ENCODE measurements at regions of chr4 and their contacts with region 1.

Region 1: DNA sequence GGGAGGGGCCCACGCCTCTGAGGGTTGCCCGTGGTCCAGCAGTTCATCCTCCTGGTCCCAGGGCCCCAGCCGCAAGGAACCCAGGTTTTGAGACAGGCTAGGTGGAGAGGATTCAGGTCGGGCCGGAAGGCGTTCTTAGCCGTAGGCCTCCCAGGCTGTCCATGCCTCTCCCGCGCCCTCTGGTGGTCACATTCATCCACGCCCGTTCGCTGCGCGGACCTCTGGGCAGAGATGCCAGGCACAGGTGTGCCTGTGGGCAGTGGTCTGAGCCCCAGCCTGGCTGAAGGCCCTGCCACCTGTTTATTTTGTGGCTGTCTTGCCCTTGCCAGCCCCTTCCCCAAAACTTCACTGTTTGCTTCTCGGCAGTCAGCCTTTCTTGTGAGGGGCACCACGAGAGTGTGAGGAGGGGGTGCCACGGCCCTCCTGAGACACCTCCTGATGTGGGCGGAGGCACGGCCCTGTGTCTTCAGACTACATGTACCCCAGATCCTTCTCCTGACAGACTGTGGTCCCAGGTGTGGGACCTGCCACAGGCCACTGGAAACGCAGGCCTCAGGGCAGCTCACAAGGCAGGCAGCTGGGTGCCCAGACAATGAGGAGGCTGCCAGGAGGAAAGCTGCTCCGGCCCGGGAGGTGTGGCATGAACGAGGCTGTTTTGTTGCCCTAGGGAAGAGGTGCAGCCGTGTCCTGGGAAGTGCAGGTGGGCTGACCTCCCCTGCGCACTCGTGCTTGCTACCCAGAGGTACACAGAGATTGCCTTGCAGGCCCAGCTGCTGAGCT is 5.0 kb downstream of the UVSSA start:
- DNase-seq: peak in 1 of 2 donors; percentile 91
- H3K4me3 ChIP-seq: no peak overlapping the region
- H3K27ac ChIP-seq: no peak overlapping the region
- H3K4me1 ChIP-seq: peaks cover 9 to 15% of the 10 kb centered on the region in 2 donors
- H3K27me3 ChIP-seq: no peaks in the 10 kb centered on the region
- CTCF ChIP-seq: peak; percentile 81 to 95 (median 93)

Region 2: DNA sequence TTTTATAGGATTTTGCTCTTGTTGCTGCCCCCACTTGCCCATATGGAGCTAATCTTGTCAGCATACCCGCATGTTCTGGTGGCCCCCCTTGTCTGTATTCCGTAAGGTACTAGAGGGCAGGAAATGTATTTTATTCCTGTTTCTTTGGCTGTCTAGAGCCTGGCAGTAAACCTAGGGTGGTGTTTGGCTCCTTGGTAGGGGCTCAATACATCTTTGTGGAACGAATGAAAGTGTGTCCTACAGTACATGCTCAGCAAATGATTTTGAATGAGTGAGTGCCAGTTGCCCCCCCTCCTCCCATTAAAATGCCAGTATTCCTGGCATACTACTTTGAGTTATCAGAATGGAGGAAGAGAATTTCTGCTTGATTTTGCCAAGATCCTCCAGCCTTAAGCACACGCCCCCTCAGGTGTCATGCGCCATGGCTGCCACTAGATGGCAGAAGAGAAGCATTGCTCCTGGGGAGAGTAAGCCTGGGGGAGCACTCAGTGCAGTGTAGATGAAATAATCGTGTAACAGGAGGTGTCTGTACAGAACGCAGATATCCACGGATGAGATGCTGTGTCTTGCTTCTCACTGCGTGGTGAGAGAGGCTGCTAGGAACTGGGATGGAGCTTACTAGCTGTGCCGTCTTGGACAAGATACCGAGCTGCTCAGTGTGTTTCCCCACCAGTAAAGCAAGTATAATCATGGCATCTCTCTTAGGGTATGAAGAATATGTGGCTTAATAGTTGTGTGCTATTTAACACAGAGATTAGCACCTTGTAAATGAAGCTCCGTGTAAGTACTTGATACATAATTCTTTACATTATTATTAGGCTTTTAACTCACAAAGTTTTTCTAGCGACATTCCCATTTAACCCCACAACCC is 221.5 kb before region 1 on chr4:
- intact Hi-C with region 1: loop called (anchors 1 kb)
- DNase-seq: peak in 1 of 2 donors; percentile 79
- H3K4me3 ChIP-seq: no peak overlapping the region
- H3K27ac ChIP-seq: no peak overlapping the region
- H3K4me1 ChIP-seq: no peaks in the 10 kb centered on the region
- H3K27me3 ChIP-seq: no peaks in the 10 kb centered on the region
- CTCF ChIP-seq: peak; percentile 92 to 100 (median 98)

Region 3: GRCh38 chr4:1289207-1290164 is 62.6 kb before region 1 on chr4 and contains the start of gene MAEA:
- intact Hi-C with region 1: no loop called
- DNase-seq: peak; percentile 85 to 98
- H3K4me3 ChIP-seq: peak within 1 kb of the TSS; percentile 86 to 96
- H3K27ac ChIP-seq: peak within 1 kb of the TSS; percentile 67 to 77
- H3K4me1 ChIP-seq: peaks cover 13 to 27% of the 10 kb centered on the region in 2 donors
- H3K27me3 ChIP-seq: no peaks in the 10 kb centered on the region
- CTCF ChIP-seq: no peak
- total RNA-seq, gene MAEA: 56.3 TPM

Region 4: GRCh38 chr4:1628892-1629698 is 277.1 kb after region 1 on chr4:
- intact Hi-C with region 1: loop called (anchors 1 kb)
- DNase-seq: peak in 1 of 2 donors; percentile 78
- H3K4me3 ChIP-seq: no peak overlapping the region
- H3K27ac ChIP-seq: no peak overlapping the region
- H3K4me1 ChIP-seq: no peaks in the 10 kb centered on the region
- H3K27me3 ChIP-seq: no peaks in the 10 kb centered on the region
- CTCF ChIP-seq: peak; percentile 85 to 98 (median 96)

Region 5: GRCh38 chr4:2095789-2096570 is 743.9 kb after region 1 on chr4:
- intact Hi-C with region 1: no loop called
- DNase-seq: no peak
- H3K4me3 ChIP-seq: no peak overlapping the region
- H3K27ac ChIP-seq: no peak overlapping the region
- H3K4me1 ChIP-seq: no peaks in the 10 kb centered on the region
- H3K27me3 ChIP-seq: no peaks in the 10 kb centered on the region
- CTCF ChIP-seq: no peak